ENCODE measurements at regions of chr4 and their contacts with region 1.

Region 1: GRCh38 chr4:10949039-10949733 is 264.6 kb upstream of the CLNK start:
- DNase-seq: no peak
- H3K4me3 Mint-ChIP-seq: no peak overlapping the region
- H3K27ac Mint-ChIP-seq: no peak overlapping the region
- H3K4me1 Mint-ChIP-seq: peaks cover 2% of the 10 kb centered on the region
- H3K27me3 Mint-ChIP-seq: peaks cover 9% of the 10 kb centered on the region

Region 2: GRCh38 chr4:10809905-10810304 is 139.3 kb before region 1 on chr4:
- intact Hi-C with region 1: loop called (anchors 5 kb)
- DNase-seq: no peak
- H3K4me3 Mint-ChIP-seq: no peak overlapping the region
- H3K27ac Mint-ChIP-seq: no peak overlapping the region
- H3K4me1 Mint-ChIP-seq: peaks cover 2% of the 10 kb centered on the region
- H3K27me3 Mint-ChIP-seq: no peaks in the 10 kb centered on the region

Region 3: DNA sequence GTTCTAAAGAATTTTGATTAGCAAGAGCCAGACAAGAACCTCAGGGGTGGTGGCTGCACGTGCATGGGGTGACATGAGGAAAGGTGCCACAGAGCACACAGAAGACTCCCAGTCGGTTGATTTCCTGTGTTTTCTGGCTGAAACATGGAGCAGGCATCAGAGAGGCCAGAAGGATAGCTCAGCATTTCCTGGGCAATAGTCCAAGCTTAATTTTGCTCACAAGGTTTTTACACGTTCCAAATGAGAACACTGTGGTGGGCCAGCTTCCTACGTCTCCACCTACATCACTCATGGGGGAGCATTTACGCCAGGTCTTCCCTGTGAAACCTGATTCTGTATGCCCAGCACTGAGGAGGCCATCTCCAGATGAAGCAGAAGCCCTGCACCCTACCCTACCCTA is 52.1 kb before region 1 on chr4:
- intact Hi-C with region 1: loop called (anchors 5 kb)
- DNase-seq: no peak
- H3K4me3 Mint-ChIP-seq: no peak overlapping the region
- H3K27ac Mint-ChIP-seq: no peak overlapping the region
- H3K4me1 Mint-ChIP-seq: peaks cover 7% of the 10 kb centered on the region
- H3K27me3 Mint-ChIP-seq: peaks cover under 1% of the 10 kb centered on the region

Measured in activated CD4-positive, alpha-beta T cell treated with anti-CD3 and anti-CD28 coated beads, Interleukin-2, amount 10 ng/mL, durations not matched to agents 24 days and 14 days (primary cell).